ENCODE measurements at regions of chr4 and their contacts with region 1.

Region 1: DNA sequence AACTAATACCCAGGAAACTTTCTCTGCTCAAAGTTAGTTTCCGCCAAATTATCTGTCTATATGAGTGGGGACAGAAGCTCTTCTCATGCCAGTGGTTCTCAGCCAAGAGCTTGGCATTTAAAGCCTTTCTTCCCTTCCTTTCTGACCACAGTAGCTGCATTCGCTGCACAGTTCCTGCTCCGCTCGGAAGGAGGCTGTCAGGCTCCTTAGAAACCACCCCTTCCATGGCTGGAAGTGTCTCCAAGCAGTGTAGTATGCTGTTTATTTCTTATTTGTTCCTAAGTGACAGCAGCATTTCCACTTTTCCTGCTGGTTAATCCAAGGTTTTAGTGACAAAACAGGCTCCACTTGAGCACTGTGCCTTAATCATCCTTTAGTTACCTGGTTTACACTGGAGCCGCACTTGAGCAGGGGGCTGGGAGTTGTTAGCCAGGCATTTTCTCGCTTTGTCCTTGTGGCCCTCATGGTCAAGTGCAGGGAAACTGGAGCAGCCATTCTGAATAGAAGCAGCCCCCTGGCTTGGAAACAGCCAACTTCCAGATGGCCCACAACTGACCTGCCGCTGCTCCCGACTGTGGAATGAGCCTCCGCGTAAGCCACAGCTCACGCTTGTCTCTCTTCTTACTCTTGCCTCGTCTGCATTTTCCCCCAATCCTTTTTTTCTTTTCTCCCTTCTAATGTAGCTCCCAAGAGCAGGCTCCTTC is 739.4 kb upstream of the TENM3 start:
- DNase-seq: no peak
- ATAC-seq: no peak
- H3K4me3 ChIP-seq: no peak overlapping the region
- H3K27ac ChIP-seq: no peak overlapping the region
- H3K4me1 ChIP-seq: no peaks in the 10 kb centered on the region
- H3K27me3 ChIP-seq: peaks cover 0 to 6% of the 10 kb centered on the region in 2 experiments; a peak in 1 of 5 replicates
- CTCF ChIP-seq: no peak
- EP300 ChIP-seq: no peak
- POLR2A ChIP-seq: no peak
- RAD21 ChIP-seq: no peak

Region 2: DNA sequence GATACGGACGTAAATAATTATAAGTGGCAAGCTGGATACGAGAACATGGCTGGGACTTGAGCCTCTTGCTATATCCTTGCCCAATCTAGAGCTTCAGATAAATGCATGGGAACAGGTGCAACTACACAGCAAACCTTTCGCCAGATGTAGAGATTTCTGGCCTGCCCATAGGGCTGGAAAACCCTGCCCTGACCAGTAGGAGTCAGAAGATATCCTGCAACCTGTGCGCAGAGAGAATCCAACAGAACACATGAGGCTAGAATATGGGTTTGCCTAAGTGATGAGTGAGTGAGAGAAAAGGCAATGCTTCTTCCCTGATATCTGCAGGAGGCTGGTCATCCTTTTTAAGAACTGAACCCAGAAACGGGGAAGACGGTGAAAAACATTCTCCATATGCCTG is 65.9 kb before region 1 on chr4:
- CTCF ChIA-PET with region 1: no interaction called
- POLR2A ChIA-PET with region 1: no interaction called
- in situ Hi-C with region 1: no loop called
- intact Hi-C with region 1: loop called (anchors 2 kb)
- DNase-seq: no peak
- ATAC-seq: no peak
- H3K4me3 ChIP-seq: no peak overlapping the region
- H3K27ac ChIP-seq: no peak overlapping the region
- H3K4me1 ChIP-seq: no peaks in the 10 kb centered on the region
- H3K27me3 ChIP-seq: no peaks in the 10 kb centered on the region
- CTCF ChIP-seq: no peak
- EP300 ChIP-seq: no peak
- POLR2A ChIP-seq: no peak
- RAD21 ChIP-seq: no peak

Region 3: GRCh38 chr4:181569553-181569952 is 65.7 kb after region 1 on chr4:
- CTCF ChIA-PET with region 1: no interaction called
- POLR2A ChIA-PET with region 1: no interaction called
- in situ Hi-C with region 1: no loop called
- intact Hi-C with region 1: no loop called
- DNase-seq: peak; percentile 9
- ATAC-seq: peak; percentile 82
- H3K4me3 ChIP-seq: no peak overlapping the region
- H3K27ac ChIP-seq: no peak overlapping the region
- H3K4me1 ChIP-seq: no peaks in the 10 kb centered on the region
- H3K27me3 ChIP-seq: no peaks in the 10 kb centered on the region
- CTCF ChIP-seq: peak; percentile 47
- EP300 ChIP-seq: no peak
- POLR2A ChIP-seq: no peak
- RAD21 ChIP-seq: no peak

Region 4: DNA sequence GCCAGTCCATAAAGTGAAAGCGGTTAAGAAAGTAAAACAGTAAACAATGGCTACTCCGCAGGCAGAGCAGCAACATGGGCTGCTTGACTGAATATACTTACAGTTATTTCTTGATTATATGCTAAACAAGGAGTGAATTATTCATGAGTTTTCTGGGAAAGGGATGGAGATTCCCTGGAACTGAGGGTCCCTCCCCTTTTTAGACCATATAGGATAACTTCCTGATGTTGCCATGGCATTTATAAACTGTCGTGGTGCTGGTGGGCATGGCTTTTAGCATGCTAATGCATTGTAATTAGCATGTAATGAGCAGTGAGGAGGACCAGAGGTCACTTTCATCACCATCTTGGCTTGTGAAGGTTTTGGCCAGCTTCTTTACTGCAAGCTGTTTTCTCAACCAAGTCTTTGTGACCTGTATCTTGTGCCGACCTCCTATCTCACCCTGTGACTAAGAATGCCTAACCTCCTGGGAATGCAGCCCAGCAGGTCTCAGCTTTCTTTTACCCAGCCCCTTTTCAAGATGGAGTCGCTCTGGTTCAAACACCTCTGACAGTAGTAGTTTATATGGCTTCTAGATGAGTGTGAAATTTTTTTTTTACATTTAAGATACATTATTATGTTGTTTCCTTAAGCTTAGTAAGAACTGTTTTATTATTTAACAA is 224.6 kb after region 1 on chr4:
- CTCF ChIA-PET with region 1: no interaction called
- POLR2A ChIA-PET with region 1: no interaction called
- in situ Hi-C with region 1: no loop called
- intact Hi-C with region 1: no loop called
- DNase-seq: no peak
- ATAC-seq: no peak
- H3K4me3 ChIP-seq: no peak overlapping the region
- H3K27ac ChIP-seq: no peak overlapping the region
- H3K4me1 ChIP-seq: no peaks in the 10 kb centered on the region
- H3K27me3 ChIP-seq: no peaks in the 10 kb centered on the region; a peak in 1 of 5 replicates
- CTCF ChIP-seq: no peak
- EP300 ChIP-seq: no peak
- POLR2A ChIP-seq: no peak
- RAD21 ChIP-seq: no peak

Measured in HepG2 (cell line).